ENCODE measurements at regions of chr11 and their contacts with region 1.

Region 1: GRCh38 chr11:45102810-45103621 is 43.4 kb upstream of the PRDM11 start:
- DNase-seq: peak; percentile 43 to 84 (median 60)
- H3K4me3 ChIP-seq: peak overlapping the region; percentile 21
- H3K4me3 Mint-ChIP-seq: peak overlapping the region; percentile 36 to 89 (median 81)
- H3K27ac ChIP-seq: no peak overlapping the region
- H3K27ac Mint-ChIP-seq: peak overlapping the region; percentile 64 to 94 (median 87)
- H3K4me1 ChIP-seq: peaks cover 18% of the 10 kb centered on the region
- H3K4me1 Mint-ChIP-seq: peaks cover 24 to 30% (median 30%) of the 10 kb centered on the region in 3 donors
- H3K27me3 ChIP-seq: no peaks in the 10 kb centered on the region
- H3K27me3 Mint-ChIP-seq: peaks cover 0 to 5% of the 10 kb centered on the region in 2 donors

Region 2: GRCh38 chr11:45079943-45080719 is 22.9 kb before region 1 on chr11:
- CTCF ChIA-PET with region 1: interaction called, 25 read pairs
- POLR2A ChIA-PET with region 1: interaction called, 6 read pairs
- DNase-seq: peak; percentile 42 to 80 (median 64)
- H3K4me3 ChIP-seq: peak overlapping the region; percentile 41
- H3K4me3 Mint-ChIP-seq: peak overlapping the region; percentile 40 to 91 (median 73)
- H3K27ac ChIP-seq: peak overlapping the region; percentile 21
- H3K27ac Mint-ChIP-seq: peak overlapping the region; percentile 83 to 99 (median 94)
- H3K4me1 ChIP-seq: peaks cover 62% of the 10 kb centered on the region
- H3K4me1 Mint-ChIP-seq: peaks cover 63 to 74% (median 68%) of the 10 kb centered on the region in 3 donors
- H3K27me3 ChIP-seq: no peaks in the 10 kb centered on the region
- H3K27me3 Mint-ChIP-seq: no peaks in the 10 kb centered on the region

Region 3: GRCh38 chr11:45285930-45286632 is 183.1 kb after region 1 on chr11 and contains the start of gene SYT13:
- CTCF ChIA-PET with region 1: no interaction called
- POLR2A ChIA-PET with region 1: no interaction called
- DNase-seq: no peak
- H3K4me3 ChIP-seq: no peak within 1 kb of the TSS
- H3K4me3 Mint-ChIP-seq: peak within 1 kb of the TSS in 3 of 7 donors; percentile 10 to 65 (median 42)
- H3K27ac ChIP-seq: no peak within 1 kb of the TSS
- H3K27ac Mint-ChIP-seq: no peak within 1 kb of the TSS
- H3K4me1 ChIP-seq: no peaks in the 10 kb centered on the region
- H3K4me1 Mint-ChIP-seq: no peaks in the 10 kb centered on the region
- H3K27me3 ChIP-seq: peaks cover 30% of the 10 kb centered on the region
- H3K27me3 Mint-ChIP-seq: peaks cover 38 to 81% of the 10 kb centered on the region in 2 donors
- total RNA-seq, gene SYT13: not detected

Measured in CD8-positive, alpha-beta memory T cell (primary cell).